Kidney (tissue), 22 donors: ENCODE measurements at regions of chr15 and their contacts with region 1.

Region 1: DNA sequence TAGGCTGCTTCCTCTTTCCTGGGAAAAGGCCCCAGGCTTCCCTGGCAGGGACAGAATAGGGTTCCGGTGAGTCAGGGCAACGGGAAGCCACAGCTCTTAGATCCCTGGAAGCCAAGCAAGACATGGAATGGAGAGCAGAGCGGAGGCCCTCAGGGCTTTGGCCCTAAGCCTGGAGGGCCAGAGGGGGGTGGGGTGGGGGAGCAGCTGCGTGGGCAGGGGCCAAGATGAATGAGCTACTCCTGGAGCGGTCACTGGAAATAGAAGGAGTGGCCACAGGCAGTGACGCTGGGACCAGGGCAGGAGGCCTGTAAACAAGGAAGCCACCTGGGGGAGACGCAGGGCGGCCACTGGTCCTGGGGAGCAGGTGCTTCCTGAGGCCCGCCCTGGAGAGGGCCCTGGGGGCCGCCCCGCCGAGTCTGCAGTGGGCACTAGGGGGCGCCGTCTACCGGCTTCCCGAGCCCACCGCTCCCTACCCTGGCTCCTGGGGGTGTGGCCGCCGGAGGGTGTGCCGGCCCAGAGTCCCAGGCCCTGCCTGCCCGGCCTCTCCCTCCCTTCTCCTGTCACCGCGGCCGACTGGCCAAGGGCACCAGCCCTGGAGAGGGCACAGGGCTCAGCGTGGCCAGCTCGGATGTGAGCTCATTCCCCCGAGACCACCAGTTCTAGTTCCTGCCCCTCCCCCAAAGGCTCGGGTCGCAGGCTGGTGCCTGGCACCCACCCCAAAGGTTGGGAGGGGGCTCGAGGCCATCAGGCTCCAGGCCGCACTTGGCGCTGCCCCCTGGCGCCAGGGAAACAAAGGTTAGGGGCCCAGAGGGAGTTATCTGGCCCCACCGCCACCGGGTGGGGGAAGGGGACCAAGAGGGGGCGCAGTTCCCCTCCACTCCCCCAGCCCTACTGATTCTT is 12.1 kb downstream of the VPS18 start:
- DNase-seq: peak; percentile 88 to 97 (median 94)
- H3K4me3 ChIP-seq: peak overlapping the region; percentile 28 to 64 (median 30)
- H3K27ac ChIP-seq: peak overlapping the region; percentile 97 to 98
- H3K4me1 ChIP-seq: peaks cover 5 to 38% (median 10%) of the 10 kb centered on the region in 3 donors
- H3K27me3 ChIP-seq: no peaks in the 10 kb centered on the region
- CTCF ChIP-seq: peak; percentile 69

Region 2: DNA sequence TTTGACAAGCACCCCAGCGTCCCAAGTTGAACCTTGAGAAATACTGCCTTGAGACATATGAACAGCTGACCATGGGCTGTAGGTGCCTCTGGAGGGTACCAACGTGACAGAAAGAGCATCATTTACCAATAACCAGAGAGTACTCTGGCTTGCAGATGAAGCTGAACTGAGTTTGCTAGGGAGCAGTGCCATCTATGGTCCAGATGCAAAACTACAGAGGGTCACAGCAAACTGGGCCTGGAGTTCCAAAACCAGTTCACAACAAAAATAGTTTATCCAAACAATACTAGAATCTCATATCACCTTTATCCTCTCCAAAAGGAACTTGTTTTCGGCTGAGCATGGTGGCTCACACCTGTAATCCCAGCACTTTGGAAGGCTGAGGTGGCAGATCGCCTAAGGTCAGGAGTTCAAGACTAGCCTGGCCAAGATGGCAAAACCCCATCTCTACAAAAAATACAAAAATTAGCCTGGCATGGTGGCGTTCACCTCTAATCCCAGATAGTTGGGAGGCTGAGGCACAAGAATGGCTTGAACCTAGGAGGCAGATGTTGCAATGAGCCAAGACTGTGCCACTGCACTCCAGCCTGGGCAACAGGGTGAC is 116.2 kb after region 1 on chr15:
- intact Hi-C with region 1: loop called (anchors 10 kb)
- DNase-seq: peak in 4 of 5 donors; percentile 50 to 72 (median 59)
- H3K4me3 ChIP-seq: no peak overlapping the region
- H3K27ac ChIP-seq: no peak overlapping the region
- H3K4me1 ChIP-seq: peaks cover 0 to 3% (median 0%) of the 10 kb centered on the region in 3 donors
- H3K27me3 ChIP-seq: no peaks in the 10 kb centered on the region
- CTCF ChIP-seq: peak; percentile 63

Region 3: GRCh38 chr15:41180206-41180789 is 274.0 kb after region 1 on chr15:
- intact Hi-C with region 1: loop called (anchors 10 kb)
- DNase-seq: no peak
- H3K4me3 ChIP-seq: no peak overlapping the region
- H3K27ac ChIP-seq: no peak overlapping the region
- H3K4me1 ChIP-seq: no peaks in the 10 kb centered on the region
- H3K27me3 ChIP-seq: no peaks in the 10 kb centered on the region
- CTCF ChIP-seq: no peak

Region 4: DNA sequence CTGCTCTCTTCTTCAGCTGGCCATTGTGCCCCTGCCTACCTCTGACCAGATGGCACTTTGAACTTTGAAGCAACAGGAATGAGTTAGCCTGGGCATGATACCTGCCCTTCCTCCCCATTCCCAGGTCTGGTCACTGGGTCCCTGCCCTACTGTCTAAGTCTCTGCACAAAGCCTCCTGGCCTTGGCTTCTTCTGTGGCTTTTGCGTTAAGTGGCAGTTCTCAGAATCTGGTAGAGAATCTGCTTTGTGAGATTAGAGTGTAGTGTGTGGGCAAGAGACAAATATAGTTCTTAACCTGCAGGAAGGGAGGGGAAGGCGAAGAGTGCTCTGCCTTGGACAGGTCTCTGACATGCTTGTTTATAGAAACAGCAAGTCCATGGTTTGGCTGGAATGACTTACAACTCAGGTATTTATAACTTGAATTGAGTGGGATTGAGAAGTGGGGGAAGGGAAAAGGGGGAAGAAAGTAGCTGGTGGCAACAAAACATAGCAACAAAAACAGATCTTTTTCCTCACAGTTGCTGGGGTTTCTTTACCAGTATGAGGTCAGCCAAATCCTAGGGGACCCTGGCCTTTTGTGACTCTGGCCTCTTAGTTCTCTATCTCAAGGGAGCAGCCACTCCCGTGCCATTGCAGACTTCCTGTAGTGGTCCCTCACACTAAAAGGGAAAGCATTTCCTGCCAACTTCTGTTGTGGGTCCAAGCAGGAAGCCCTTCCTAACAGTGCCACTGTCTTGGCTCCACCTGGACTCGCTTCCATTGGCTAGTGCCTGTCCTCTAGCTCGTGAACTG is 884.6 kb after region 1 on chr15:
- intact Hi-C with region 1: no loop called
- DNase-seq: no peak
- H3K4me3 ChIP-seq: peak overlapping the region in 1 of 3 donors; percentile 6
- H3K27ac ChIP-seq: peak overlapping the region; percentile 40 to 54
- H3K4me1 ChIP-seq: peaks cover 0 to 21% (median 19%) of the 10 kb centered on the region in 3 donors
- H3K27me3 ChIP-seq: no peaks in the 10 kb centered on the region
- CTCF ChIP-seq: no peak